Posterior vena cava (tissue), 2 donors: ENCODE measurements at regions of chr20 and their contacts with region 1.

Region 1: GRCh38 chr20:3646651-3647050 is 16.5 kb downstream of the GFRA4 start:
- DNase-seq: peak; percentile 74

Region 2: DNA sequence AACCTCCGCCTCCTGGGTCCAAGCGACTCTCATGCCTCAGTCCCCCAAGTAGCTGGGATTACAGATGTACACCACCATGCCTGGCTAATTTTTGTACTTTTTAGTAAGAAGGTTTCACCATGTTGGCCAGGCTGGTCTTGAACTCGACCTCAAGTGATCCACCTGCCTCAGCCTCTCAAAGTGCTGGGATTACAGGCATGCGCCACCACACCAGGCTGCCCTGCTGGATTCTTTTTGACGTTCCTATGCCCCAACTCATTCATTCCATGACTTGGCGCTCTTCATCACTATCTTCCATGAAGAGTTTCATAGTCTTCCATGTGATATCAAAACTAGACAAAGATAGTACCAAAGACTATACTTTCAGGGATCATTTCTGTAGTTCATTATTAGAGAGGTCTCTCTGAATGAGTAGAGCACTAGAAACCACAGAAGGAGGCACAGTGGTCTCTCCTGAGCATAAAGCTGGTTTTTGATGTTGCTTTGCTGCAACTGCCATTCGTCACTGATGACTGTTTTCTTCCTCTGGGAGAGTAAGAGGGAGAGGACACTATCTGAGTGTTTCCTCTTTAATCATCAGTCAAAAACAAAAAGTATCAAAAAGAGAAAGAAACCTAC is 262.7 kb before region 1 on chr20:
- intact Hi-C with region 1: loop called in 1 of 2 experiments (anchors 2 kb)
- DNase-seq: no peak

Region 3: GRCh38 chr20:3420211-3420707 is 226.4 kb before region 1 on chr20:
- intact Hi-C with region 1: no loop called
- DNase-seq: no peak

Region 4: GRCh38 chr20:3732327-3733118 is 85.9 kb after region 1 on chr20 and contains the start of gene HSPA12B:
- intact Hi-C with region 1: no loop called
- DNase-seq: no peak
- total RNA-seq, gene HSPA12B: 18.0 to 18.5 TPM